Colonic mucosa (tissue), 4 donors: ENCODE measurements at regions of chr12 and their contacts with region 1.

Region 1: DNA sequence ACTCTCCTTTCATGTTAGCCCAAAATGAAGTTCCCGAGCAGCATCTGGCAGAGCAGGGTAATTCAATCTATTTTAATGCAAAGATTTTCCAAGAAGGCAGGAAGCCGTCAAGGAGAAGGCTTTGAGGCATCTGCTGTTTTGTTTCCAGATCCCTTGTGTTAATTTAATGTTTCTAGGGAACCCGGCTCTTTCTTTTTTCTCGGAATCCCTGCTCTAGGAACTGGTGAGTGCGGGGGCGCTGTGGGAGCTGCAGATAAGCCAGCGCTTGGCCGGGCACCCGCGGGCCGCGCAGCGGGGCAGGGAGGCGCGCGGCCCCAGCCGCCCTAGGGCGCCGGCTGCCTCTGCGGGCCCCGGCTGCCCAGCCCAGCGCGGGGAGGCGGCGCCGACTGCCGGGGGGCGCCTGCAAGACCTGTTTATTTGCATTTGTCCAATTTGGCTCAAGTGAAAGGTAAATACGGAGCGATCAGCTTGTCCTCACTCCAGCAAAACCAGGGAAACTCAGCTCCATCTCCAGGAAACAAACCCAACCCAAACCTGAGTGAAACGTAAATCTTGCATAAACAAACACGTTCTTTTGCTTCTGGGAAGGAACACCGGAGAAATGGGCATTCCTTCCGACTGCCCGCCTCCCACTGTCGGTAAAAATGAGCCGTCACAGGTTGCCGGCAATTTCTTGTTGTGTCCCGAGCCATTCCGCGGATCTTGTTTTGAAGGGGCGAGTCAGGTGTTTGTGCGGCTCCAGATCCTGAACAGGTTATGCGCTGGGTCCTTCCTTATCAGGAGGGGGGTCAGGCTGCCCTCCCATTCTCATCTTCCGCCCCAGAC is 65.1 kb downstream of the CRADD start:
- DNase-seq: peak; percentile 62
- H3K4me3 ChIP-seq: peak overlapping the region; percentile 56
- H3K27ac ChIP-seq: peak overlapping the region; percentile 84
- H3K4me1 ChIP-seq: no peaks in the 10 kb centered on the region
- H3K27me3 ChIP-seq: no peaks in the 10 kb centered on the region
- CTCF ChIP-seq: no peak

Region 2: GRCh38 chr12:93677195-93678064 is 64.9 kb before region 1 on chr12 and contains the start of gene CRADD:
- intact Hi-C with region 1: loop called (anchors 5 kb)
- DNase-seq: peak; percentile 84
- H3K4me3 ChIP-seq: peak within 1 kb of the TSS; percentile 52
- H3K27ac ChIP-seq: peak within 1 kb of the TSS; percentile 97
- H3K4me1 ChIP-seq: no peaks in the 10 kb centered on the region
- H3K27me3 ChIP-seq: no peaks in the 10 kb centered on the region
- CTCF ChIP-seq: no peak
- total RNA-seq, gene CRADD: 18.2 to 23.9 TPM